ENCODE measurements at regions of chr22 and their contacts with region 1.

Region 1: DNA sequence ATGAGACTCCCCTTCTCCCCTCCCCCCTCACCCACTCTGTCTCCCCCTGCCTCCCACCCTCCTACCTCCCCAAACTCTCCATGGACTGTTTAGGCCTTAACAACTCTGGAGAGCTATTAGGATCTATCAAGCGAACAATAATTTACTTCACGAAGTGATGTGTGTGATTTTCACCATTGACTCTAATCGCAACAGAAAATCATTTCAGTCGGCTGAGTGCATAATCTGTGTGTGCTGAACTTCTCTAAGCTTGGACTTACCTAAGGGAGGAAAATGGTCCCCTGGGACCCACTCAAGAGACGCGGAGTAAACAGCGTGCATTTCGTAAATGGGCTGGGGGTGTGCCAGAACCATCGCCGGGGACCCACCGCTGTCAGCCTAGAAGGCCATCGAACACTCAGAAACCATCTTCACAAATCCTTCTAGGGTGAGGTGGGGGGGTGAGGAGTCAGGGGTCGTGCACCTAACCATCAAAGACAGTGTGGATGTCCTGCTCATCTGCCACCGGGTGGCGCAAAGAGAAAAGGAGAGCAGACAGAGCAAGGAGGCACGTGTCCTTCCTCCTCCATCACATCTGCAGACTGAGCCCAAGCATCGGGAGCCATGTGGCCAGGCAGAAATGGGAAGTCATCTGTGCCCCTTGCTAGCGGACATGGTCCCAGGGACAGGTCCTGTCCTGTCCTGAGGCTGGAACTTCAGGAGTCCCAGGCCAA is 62.1 kb upstream of the NUP50 start:
- DNase-seq: peak; percentile 72
- ATAC-seq: peak; percentile 76
- H3K4me3 ChIP-seq: no peak overlapping the region
- H3K27ac ChIP-seq: no peak overlapping the region
- H3K4me1 ChIP-seq: no peaks in the 10 kb centered on the region
- H3K27me3 ChIP-seq: peaks cover 6% of the 10 kb centered on the region
- CTCF ChIP-seq: peak; percentile 72
- POLR2A ChIP-seq: no peak
- RAD21 ChIP-seq: peak; percentile 82

Region 2: DNA sequence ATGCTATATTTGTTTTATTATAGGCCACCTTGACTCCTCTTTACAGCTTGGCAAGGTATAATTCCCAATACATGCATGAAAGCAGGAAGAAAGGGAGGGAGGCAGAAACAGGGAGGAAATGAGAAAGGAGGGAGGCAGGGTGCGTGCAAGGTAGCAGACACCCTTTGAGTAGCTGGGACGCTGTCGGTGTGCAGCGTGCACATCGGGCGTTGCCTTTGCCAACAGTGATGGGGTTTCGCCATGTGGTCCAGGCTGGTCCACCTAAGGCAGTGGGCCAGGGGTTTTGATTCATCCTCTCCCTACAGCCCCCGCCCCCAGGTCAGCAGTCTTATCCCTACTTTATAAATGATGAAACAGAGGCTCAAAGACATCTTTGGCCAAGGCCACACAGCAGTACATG is 66.8 kb before region 1 on chr22:
- CTCF ChIA-PET with region 1: no interaction called
- POLR2A ChIA-PET with region 1: no interaction called
- dilution Hi-C with region 1: no loop called
- in situ Hi-C with region 1: no loop called
- intact Hi-C with region 1: no loop called
- DNase-seq: no peak
- ATAC-seq: no peak
- H3K4me3 ChIP-seq: no peak overlapping the region
- H3K27ac ChIP-seq: no peak overlapping the region
- H3K4me1 ChIP-seq: no peaks in the 10 kb centered on the region; the same call in 1 of the 2 replicates
- H3K27me3 ChIP-seq: peaks cover 32% of the 10 kb centered on the region
- CTCF ChIP-seq: no peak
- POLR2A ChIP-seq: no peak
- RAD21 ChIP-seq: no peak

Region 3: DNA sequence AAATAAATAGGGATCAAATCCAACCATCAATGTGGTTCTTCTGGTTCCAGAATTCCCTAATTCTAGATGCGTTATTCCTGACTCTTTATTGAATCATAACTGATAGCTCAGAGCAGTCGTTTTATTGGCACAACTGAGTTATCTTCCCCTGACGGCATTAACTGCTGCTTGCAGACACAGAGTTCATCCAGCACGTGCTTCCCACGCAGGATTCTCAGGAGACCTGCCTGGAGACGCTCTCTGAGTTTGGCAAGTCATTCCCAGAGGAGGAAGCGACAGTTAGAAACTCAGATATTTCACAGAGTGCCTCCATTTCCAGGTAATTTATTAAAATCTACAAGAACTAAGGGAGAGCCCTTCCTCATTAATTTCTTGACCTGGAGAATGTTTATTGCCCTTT is 56.5 kb before region 1 on chr22:
- CTCF ChIA-PET with region 1: no interaction called
- POLR2A ChIA-PET with region 1: no interaction called
- dilution Hi-C with region 1: no loop called
- in situ Hi-C with region 1: no loop called
- intact Hi-C with region 1: no loop called
- DNase-seq: no peak
- ATAC-seq: no peak
- H3K4me3 ChIP-seq: no peak overlapping the region
- H3K27ac ChIP-seq: no peak overlapping the region
- H3K4me1 ChIP-seq: no peaks in the 10 kb centered on the region
- H3K27me3 ChIP-seq: peaks cover 38% of the 10 kb centered on the region
- CTCF ChIP-seq: no peak
- POLR2A ChIP-seq: no peak
- RAD21 ChIP-seq: no peak

Region 4: DNA sequence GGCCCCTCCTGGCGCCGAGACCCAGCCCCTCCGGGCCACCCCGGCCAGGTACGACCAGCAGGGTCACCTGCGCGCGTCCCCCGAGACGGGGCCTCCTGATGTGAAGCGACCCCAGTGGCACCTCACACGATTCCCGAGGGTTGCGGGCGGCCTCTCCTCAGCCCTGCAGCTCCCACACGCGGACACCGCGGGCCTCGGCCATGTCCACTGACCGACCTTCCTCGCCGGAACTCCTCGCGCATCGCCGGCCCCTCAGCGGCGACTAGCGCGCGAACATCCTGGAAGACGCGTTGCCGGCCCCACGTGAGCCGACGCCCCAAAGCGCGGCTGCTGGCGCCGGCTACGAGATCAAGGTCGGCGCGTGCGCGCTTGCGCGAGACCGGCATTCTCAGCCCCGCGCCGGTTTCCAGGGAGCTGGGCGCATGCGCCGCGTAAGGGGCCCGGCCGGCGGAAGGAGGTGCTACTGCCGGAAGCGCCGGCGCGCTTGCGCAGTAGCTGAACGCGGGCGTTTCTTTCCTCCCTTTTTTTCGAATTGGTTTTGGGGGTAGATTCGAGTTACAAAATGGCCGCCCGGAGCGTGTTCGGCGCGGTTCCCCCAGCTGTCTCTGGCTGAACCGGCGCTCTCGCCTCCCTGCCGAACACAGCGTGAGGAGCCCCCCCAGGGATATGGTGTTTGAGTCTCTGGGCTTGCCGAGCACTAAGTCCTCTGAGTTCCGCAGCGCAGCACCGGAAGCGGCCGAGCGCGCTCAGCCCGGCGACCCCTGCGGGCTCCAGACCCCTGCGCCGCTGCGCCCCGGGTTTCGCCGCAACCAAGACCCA is 62.0 kb after region 1 on chr22 and contains the start of gene NUP50:
- CTCF ChIA-PET with region 1: interaction called, 3 read pairs
- POLR2A ChIA-PET with region 1: no interaction called
- dilution Hi-C with region 1: no loop called
- in situ Hi-C with region 1: no loop called
- intact Hi-C with region 1: loop called (anchors 1 kb)
- DNase-seq: peak; percentile 96
- ATAC-seq: peak; percentile 90
- H3K4me3 ChIP-seq: peak within 1 kb of the TSS; percentile 88
- H3K27ac ChIP-seq: peak within 1 kb of the TSS; percentile 84
- H3K4me1 ChIP-seq: peaks cover 11% of the 10 kb centered on the region
- H3K27me3 ChIP-seq: no peaks in the 10 kb centered on the region
- CTCF ChIP-seq: peak; percentile 19; the same call in 1 of the 2 replicates
- POLR2A ChIP-seq: peak; percentile 92
- RAD21 ChIP-seq: peak; percentile 29
- total RNA-seq, gene NUP50: 61.1 and 65.4 TPM in 2 replicates

Region 5: DNA sequence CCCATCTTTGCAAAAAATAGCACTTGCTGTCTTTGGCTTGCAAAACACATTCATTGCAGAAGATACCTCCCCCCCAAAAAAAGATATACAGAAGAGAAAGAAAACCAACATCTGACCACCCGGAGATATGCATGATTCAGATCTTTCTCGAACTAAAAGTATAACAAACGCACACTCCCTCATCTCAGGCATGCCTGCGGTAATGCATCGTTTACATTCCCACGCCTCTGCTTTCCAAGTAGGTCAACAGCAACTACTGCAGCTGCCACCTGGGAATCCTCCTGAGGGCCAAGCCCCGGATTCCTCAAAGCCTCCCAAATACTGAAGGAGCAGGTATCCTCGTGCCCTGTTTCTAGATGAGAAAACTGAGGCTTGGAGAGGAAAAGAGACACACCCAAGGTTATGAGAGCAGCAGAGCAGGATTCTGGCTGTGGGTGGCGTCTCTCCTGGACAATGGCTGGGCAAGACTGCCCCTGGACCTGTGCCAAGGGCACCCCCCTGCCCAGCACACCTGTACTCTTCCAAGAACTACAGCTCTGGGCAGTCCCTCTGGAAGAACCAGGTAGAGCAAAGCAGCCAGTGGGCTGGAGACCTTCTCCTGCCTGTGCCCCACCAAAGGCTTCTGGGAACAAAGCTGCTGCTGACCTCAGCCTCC is 100.1 kb after region 1 on chr22:
- CTCF ChIA-PET with region 1: no interaction called
- POLR2A ChIA-PET with region 1: no interaction called
- dilution Hi-C with region 1: no loop called
- in situ Hi-C with region 1: no loop called
- intact Hi-C with region 1: loop called (anchors 5 kb)
- DNase-seq: peak; percentile 100
- ATAC-seq: peak; percentile 88
- H3K4me3 ChIP-seq: no peak overlapping the region
- H3K27ac ChIP-seq: peak overlapping the region; percentile 38
- H3K4me1 ChIP-seq: peaks cover 21% of the 10 kb centered on the region
- H3K27me3 ChIP-seq: no peaks in the 10 kb centered on the region
- CTCF ChIP-seq: no peak
- POLR2A ChIP-seq: no peak
- RAD21 ChIP-seq: no peak; the same call in 1 of the 2 replicates

Region 6: DNA sequence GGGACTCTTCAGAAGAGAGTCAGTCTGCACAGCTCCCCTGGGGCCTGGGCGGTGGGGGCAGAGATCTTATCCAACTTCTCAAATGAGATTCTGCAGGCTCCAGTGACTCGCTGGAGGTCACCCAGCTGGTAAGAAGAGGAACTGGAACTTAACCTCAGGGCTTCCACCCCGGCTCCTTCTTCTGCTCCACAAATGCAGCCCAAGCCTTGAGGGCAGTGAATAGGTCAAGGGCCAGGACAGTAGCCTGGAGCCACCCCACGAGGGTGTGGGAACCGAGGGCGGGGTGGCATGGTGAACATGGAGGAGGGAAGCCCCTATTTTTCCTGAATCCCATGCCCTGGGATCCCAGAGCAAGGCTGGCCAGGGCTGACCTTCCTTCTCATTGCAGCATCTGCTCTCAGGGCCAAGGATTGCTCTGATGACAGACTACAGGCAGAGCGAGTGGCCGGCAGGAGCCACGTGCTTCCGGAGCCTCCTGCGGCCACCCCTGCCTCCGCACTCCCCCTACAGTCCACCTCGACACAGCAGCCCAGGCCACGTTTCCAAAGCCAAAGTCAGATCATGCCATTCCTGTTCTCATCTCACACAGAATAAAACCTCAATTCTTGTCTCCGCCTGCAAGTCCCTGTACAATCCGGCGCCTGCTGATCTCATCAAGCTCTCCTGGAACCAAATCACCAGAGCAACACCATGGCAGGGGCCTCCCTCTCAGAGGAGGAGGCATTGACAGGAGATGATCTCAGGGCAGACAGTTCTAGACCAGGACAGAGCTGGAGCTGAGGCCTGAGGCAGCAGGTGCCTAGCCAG is 162.0 kb after region 1 on chr22:
- CTCF ChIA-PET with region 1: interaction called, 3 read pairs
- POLR2A ChIA-PET with region 1: no interaction called
- dilution Hi-C with region 1: no loop called
- in situ Hi-C with region 1: loop called (anchors 5 kb)
- intact Hi-C with region 1: loop called (anchors 1 kb)
- DNase-seq: peak; percentile 84
- ATAC-seq: peak; percentile 94
- H3K4me3 ChIP-seq: no peak overlapping the region
- H3K27ac ChIP-seq: no peak overlapping the region
- H3K4me1 ChIP-seq: peaks cover 2% of the 10 kb centered on the region; the same call in 1 of the 2 replicates
- H3K27me3 ChIP-seq: no peaks in the 10 kb centered on the region
- CTCF ChIP-seq: peak; percentile 92
- POLR2A ChIP-seq: no peak
- RAD21 ChIP-seq: peak; percentile 93

Region 7: GRCh38 chr22:45435544-45436139 is 334.0 kb after region 1 on chr22:
- CTCF ChIA-PET with region 1: no interaction called
- POLR2A ChIA-PET with region 1: no interaction called
- dilution Hi-C with region 1: no loop called
- in situ Hi-C with region 1: no loop called
- intact Hi-C with region 1: loop called (anchors 5 kb)
- DNase-seq: peak; percentile 90
- ATAC-seq: peak; percentile 96
- H3K4me3 ChIP-seq: no peak overlapping the region
- H3K27ac ChIP-seq: peak overlapping the region; percentile 8; the same call in 1 of the 2 replicates
- H3K4me1 ChIP-seq: 0 out of 2 replicates have a peak, but pooled peaks cover 2% of the 10 kb centered on the region
- H3K27me3 ChIP-seq: no peaks in the 10 kb centered on the region
- CTCF ChIP-seq: peak; percentile 95
- POLR2A ChIP-seq: 0 out of 2 replicates have a peak, but pooled peaks have one; percentile 35
- RAD21 ChIP-seq: peak; percentile 88

Measured in IMR-90 (cell line).